CD4-positive, alpha-beta T cell (primary cell): ENCODE measurements at regions of chr6 and their contacts with region 1.

Region 1: GRCh38 chr6:154060076-154060475 is 21.0 kb downstream of the OPRM1 start:
- DNase-seq: no peak
- ATAC-seq: no peak
- H3K4me3 ChIP-seq: no peak overlapping the region
- H3K4me3 Mint-ChIP-seq: no peak overlapping the region
- H3K27ac ChIP-seq: no peak overlapping the region
- H3K27ac Mint-ChIP-seq: no peak overlapping the region
- H3K4me1 ChIP-seq: no peaks in the 10 kb centered on the region
- H3K4me1 Mint-ChIP-seq: no peaks in the 10 kb centered on the region
- H3K27me3 ChIP-seq: no peaks in the 10 kb centered on the region
- H3K27me3 Mint-ChIP-seq: peaks cover 14% of the 10 kb centered on the region
- CTCF ChIP-seq: no peak

Region 2: DNA sequence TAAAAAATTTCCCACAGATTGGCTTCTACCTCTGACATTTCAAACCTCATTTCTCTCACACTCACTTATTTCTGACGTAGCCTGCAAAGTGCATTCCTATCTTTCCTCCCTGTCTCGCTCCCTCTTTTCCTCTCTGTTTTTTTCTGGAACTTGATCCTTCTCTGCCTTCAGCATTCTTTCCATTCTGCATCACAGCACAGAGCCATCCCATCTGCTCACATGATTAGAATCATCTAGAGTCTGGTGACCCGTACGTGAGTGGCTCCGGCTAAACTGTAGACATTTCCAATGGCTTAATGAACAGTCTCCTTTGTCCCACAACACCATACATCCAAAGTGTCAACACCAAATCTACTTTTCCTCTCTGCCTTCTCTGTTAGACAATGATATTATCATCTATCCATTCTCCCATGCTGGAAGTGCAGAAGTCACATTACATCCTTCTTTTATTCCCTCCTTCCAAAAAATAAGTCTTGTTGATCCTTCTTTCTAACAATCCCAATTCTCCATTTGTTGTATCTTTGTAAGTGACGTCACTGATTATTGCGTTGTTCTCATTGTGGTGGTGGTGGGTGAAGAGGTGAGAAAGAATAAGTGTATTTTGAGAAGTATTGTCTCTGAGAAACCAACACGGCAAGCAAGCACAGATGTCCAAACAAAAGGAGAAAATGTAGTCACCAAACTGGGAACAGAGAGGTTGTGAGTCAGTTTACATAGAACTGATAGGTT is 20.5 kb after region 1 on chr6:
- CTCF ChIA-PET with region 1: no interaction called
- POLR2A ChIA-PET with region 1: no interaction called
- intact Hi-C with region 1: loop called (anchors 1 kb)
- DNase-seq: no peak
- ATAC-seq: no peak
- H3K4me3 ChIP-seq: no peak overlapping the region
- H3K4me3 Mint-ChIP-seq: no peak overlapping the region
- H3K27ac ChIP-seq: no peak overlapping the region
- H3K27ac Mint-ChIP-seq: no peak overlapping the region
- H3K4me1 ChIP-seq: no peaks in the 10 kb centered on the region
- H3K4me1 Mint-ChIP-seq: no peaks in the 10 kb centered on the region
- H3K27me3 ChIP-seq: no peaks in the 10 kb centered on the region
- H3K27me3 Mint-ChIP-seq: peaks cover 5% of the 10 kb centered on the region
- CTCF ChIP-seq: no peak

Region 3: DNA sequence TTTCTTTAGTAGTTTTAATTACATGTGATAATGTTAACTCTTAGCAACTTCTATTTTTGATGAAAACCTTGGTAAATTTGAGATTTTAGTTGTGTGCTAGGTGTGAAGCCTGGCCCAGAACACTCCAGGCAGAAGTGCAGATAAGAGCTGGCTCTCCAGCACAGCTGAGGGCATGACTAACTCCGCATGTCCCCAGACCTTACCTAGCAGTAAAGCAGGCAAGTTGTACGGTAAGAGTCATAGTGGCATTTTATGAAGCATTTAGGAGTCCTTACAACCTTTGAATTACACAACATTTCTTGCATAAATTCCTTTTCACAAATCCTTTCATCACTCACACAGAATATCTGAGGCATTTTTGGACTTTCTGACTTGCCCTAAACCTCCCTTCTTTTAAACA is 46.2 kb after region 1 on chr6:
- CTCF ChIA-PET with region 1: no interaction called
- POLR2A ChIA-PET with region 1: no interaction called
- intact Hi-C with region 1: loop called in 1 of 2 experiments (anchors 1 kb)
- DNase-seq: no peak
- ATAC-seq: no peak
- H3K4me3 ChIP-seq: no peak overlapping the region
- H3K4me3 Mint-ChIP-seq: no peak overlapping the region
- H3K27ac ChIP-seq: no peak overlapping the region
- H3K27ac Mint-ChIP-seq: no peak overlapping the region
- H3K4me1 ChIP-seq: no peaks in the 10 kb centered on the region
- H3K4me1 Mint-ChIP-seq: no peaks in the 10 kb centered on the region
- H3K27me3 ChIP-seq: peaks cover 0 to 4% of the 10 kb centered on the region in 2 experiments
- H3K27me3 Mint-ChIP-seq: peaks cover 7% of the 10 kb centered on the region
- CTCF ChIP-seq: no peak